Activated CD4-positive, alpha-beta T cell treated with anti-CD3 and anti-CD28 coated beads, Interleukin-2, amount 10 ng/mL, durations not matched to agents 7 days and 5 days (primary cell): ENCODE measurements at regions of chr15 and their contacts with region 1.

Region 1: DNA sequence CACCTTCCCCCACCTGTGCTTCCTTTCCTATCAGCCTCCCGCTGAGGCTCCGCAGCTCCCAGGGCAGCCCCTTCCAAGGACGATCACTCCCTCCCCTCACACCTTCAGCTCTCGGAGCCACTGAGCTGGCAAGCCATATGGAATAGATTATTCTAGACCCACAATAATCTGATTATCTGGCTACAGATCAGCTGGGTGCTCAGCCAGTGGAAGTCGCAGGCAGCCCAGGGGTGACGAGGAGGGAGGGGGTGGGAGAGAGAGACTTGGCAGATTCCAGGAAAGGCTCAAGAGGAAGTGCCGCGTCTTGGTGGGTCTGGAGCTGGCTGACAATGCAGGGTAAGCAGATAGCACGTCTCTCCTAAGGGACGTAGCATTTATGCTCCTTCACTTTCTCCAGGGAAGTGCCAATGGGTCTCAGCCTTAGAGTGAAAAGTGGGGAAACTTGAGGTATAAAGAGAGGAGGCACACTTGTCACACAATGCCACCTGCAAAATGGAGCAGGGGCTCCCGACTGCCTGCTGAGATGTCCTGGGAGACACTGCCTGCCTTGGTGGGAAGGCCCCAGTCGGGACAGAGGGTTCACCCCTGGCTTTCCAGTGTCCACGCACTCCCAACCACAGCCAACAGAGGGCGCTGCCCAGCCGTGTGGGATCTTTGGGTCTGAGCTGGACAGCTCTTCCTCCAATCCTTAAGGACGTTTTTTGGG is 9.4 kb upstream of the MESP1 start:
- DNase-seq: peak; percentile 75
- H3K4me3 Mint-ChIP-seq: no peak overlapping the region
- H3K27ac Mint-ChIP-seq: no peak overlapping the region
- H3K4me1 Mint-ChIP-seq: peaks cover 5% of the 10 kb centered on the region
- H3K27me3 Mint-ChIP-seq: peaks cover 9% of the 10 kb centered on the region

Region 2: DNA sequence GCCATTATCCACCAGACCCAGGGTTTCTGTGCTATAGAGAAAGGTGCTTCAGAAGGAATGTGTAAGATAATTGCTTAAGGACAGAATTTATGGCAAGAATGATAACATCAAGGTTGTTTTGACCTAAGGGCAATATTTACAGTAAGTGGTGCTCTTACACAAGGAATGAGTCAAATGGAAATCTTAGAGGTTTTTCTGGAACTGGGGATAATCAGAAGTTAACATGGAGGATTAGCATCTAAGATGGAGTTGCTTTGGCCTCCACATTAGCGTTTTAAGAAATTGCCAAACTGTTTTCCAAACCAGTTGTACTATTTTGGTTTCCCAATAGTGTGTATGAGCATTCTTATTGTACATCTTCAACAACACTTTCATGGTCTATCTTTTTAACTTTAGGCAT is 66.8 kb before region 1 on chr15:
- CTCF ChIA-PET with region 1: no interaction called
- POLR2A ChIA-PET with region 1: no interaction called
- DNase-seq: no peak
- H3K4me3 Mint-ChIP-seq: no peak overlapping the region
- H3K27ac Mint-ChIP-seq: no peak overlapping the region
- H3K4me1 Mint-ChIP-seq: peaks cover 19% of the 10 kb centered on the region
- H3K27me3 Mint-ChIP-seq: peaks cover 17% of the 10 kb centered on the region

Region 3: GRCh38 chr15:89772932-89773583 is 12.6 kb after region 1 on chr15:
- CTCF ChIA-PET with region 1: interaction called, 23 read pairs
- POLR2A ChIA-PET with region 1: no interaction called
- DNase-seq: no peak
- H3K4me3 Mint-ChIP-seq: no peak overlapping the region
- H3K27ac Mint-ChIP-seq: no peak overlapping the region
- H3K4me1 Mint-ChIP-seq: no peaks in the 10 kb centered on the region
- H3K27me3 Mint-ChIP-seq: peaks cover 14% of the 10 kb centered on the region

Region 4: DNA sequence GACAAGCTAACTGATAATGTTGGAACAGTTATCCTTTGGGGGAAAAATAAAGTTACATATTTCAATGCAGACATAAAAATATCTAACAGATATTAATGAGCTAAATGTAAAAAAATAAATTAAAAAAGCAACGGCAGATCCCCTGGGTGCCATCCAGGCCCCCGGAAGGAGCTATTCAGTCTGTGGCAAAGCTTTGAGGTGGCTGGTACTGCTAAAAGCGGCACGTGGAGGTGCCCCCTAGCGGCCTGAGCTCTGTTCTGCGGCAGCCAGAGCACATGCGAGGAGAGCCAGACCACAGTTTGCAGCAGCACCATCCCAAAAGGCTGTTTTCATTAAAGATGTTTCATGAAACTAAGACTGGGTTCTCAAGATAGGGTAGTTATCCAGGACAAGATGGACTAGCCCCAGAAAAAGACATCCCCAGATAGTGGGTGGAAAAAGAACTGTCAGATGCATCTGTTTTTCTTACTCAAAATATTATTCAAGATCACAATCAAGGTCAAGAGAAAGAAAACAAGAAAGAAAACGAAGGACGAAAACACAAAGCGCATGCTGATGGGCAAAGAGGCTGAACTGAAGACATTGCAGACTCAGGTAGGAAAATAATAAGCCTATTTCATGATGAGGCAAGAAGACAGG is 114.6 kb after region 1 on chr15:
- CTCF ChIA-PET with region 1: interaction called, 25 read pairs
- POLR2A ChIA-PET with region 1: interaction called, 3 read pairs
- DNase-seq: peak; percentile 85
- H3K4me3 Mint-ChIP-seq: no peak overlapping the region
- H3K27ac Mint-ChIP-seq: no peak overlapping the region
- H3K4me1 Mint-ChIP-seq: peaks cover 5% of the 10 kb centered on the region
- H3K27me3 Mint-ChIP-seq: no peaks in the 10 kb centered on the region

Region 5: GRCh38 chr15:89912674-89913396 is 152.4 kb after region 1 on chr15 and contains the start of gene ARPIN:
- CTCF ChIA-PET with region 1: interaction called, 10 read pairs
- POLR2A ChIA-PET with region 1: no interaction called
- DNase-seq: no peak
- H3K4me3 Mint-ChIP-seq: peak within 1 kb of the TSS; percentile 29
- H3K27ac Mint-ChIP-seq: no peak within 1 kb of the TSS
- H3K4me1 Mint-ChIP-seq: no peaks in the 10 kb centered on the region
- H3K27me3 Mint-ChIP-seq: peaks cover 42% of the 10 kb centered on the region
- total RNA-seq, gene ARPIN: not detected